ENCODE measurements at regions of chr3 and their contacts with region 1.

Region 1: GRCh38 chr3:47324278-47324865 is 41.6 kb downstream of the KLHL18 start:
- DNase-seq: peak; percentile 6 to 69 (median 52)
- ATAC-seq: peak; percentile 56
- H3K4me3 ChIP-seq: no peak overlapping the region
- H3K4me3 Mint-ChIP-seq: no peak overlapping the region
- H3K27ac ChIP-seq: no peak overlapping the region
- H3K27ac Mint-ChIP-seq: no peak overlapping the region
- H3K4me1 ChIP-seq: no peaks in the 10 kb centered on the region
- H3K4me1 Mint-ChIP-seq: no peaks in the 10 kb centered on the region
- H3K27me3 ChIP-seq: no peaks in the 10 kb centered on the region
- H3K27me3 Mint-ChIP-seq: no peaks in the 10 kb centered on the region
- CTCF ChIP-seq: peak; percentile 70

Region 2: DNA sequence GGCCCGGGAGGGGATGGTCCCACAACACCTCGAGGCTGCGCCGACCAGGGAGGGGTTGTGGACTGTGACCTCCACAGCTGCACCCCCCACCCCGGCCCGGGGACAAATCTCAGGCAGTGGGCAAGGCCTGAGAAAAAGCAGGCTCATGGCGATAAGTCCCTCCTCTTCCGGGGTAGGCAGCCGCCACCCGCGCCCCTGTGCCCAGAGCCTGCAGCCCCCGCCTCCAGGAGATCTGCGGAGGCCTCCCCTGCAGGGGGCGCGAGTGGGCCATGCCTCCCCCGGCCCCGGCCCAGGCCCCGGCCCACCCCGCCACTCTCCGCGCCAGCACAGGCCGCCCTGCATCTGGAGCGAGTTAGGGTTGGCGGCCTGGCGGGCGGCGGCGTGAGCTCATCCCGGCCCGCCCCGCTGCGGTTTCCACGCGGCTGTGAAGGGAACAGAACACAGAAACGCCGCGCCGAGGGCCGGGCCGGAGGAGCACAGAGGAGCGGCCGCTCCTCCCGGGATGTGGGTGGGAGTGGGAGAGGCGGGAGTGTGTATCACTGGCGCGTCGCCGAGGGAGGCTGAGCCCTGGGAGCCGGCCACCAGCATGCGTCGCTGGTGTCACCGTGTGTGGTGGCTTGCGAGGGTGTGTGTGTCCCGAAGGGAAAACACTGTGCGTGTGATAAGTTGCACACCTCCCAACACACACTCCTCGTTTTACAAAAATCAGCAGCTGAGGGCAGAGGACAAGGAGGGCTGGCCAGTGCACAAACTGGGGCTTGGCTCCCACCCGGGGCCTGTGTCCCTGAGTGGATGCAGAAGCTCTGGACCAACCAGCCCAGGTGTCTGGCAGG is 478.4 kb before region 1 on chr3:
- CTCF ChIA-PET with region 1: no interaction called
- POLR2A ChIA-PET with region 1: no interaction called
- intact Hi-C with region 1: loop called in 1 of 2 experiments (anchors 5 kb)
- DNase-seq: peak; percentile 55 to 86 (median 79)
- ATAC-seq: peak; percentile 95
- H3K4me3 ChIP-seq: peak overlapping the region; percentile 64 to 82
- H3K4me3 Mint-ChIP-seq: peak overlapping the region; percentile 85
- H3K27ac ChIP-seq: peak overlapping the region; percentile 32 to 36
- H3K27ac Mint-ChIP-seq: peak overlapping the region; percentile 55
- H3K4me1 ChIP-seq: peaks cover 10% of the 10 kb centered on the region
- H3K4me1 Mint-ChIP-seq: peaks cover 11% of the 10 kb centered on the region
- H3K27me3 ChIP-seq: no peaks in the 10 kb centered on the region
- H3K27me3 Mint-ChIP-seq: no peaks in the 10 kb centered on the region
- CTCF ChIP-seq: peak; percentile 68

Region 3: DNA sequence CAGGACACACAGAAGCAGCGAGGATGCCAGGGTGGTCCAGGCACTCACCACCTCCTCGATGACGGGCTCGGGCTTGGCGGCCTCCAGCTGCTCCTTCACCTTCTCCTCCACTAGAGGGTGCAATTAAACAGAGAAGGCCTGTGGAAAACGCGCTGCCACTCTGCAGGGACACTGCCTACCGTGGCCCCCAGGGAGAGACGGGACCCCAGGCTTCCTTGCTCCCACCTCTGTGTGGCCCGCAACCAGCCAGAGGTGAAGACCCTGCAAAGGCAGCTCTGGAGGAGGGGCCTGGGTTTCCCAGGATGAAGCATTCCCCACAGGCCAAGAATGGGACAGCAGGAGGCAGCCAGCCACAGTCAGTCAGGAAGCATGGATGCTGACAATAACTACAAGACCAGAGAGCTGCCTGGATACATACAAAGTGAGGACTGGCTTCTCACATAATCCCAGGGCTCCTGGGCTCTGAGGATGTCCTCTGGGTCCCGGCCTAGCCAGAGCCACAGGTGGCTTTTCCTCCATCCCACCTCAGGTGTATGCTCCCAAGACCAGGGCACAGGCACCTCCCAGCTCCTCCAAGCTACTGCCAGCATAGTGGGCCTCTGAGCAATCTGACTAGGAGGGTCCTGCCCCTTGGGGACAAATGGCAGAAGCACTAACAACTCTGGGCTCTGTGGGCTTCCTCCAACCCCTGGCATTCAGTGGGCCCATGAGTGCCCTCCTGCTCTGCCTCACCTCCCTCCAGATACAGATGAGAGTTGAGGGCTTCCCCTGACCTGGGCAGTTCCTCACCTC is 400.6 kb before region 1 on chr3:
- CTCF ChIA-PET with region 1: interaction called, 5 read pairs
- POLR2A ChIA-PET with region 1: no interaction called
- intact Hi-C with region 1: loop called in 1 of 2 experiments (anchors 5 kb)
- DNase-seq: peak in 7 of 9 experiments; percentile 16 to 61 (median 48)
- ATAC-seq: peak; percentile 63
- H3K4me3 ChIP-seq: no peak overlapping the region
- H3K4me3 Mint-ChIP-seq: no peak overlapping the region
- H3K27ac ChIP-seq: no peak overlapping the region
- H3K27ac Mint-ChIP-seq: peak overlapping the region; percentile 77
- H3K4me1 ChIP-seq: peaks cover 28% of the 10 kb centered on the region
- H3K4me1 Mint-ChIP-seq: peaks cover 29% of the 10 kb centered on the region
- H3K27me3 ChIP-seq: no peaks in the 10 kb centered on the region
- H3K27me3 Mint-ChIP-seq: no peaks in the 10 kb centered on the region
- CTCF ChIP-seq: peak; percentile 46

Region 4: DNA sequence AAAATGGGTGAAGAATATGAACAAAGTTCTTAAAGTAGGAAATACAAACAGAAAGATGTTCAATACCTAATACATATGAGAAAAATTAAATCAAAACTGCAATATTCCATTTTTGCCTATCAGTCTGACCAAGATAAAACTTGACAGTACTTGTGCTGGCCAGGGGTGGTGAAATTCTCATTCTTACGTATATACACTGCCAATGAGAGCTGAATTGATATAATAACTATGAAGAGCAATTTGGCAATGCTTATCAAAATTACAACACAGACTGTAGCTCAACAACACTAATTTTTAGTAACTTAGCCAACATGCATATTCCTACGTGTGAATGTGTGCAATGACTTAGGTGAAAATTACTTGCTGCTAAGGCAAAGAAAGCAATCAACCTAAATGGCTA is 250.7 kb before region 1 on chr3:
- CTCF ChIA-PET with region 1: no interaction called
- POLR2A ChIA-PET with region 1: no interaction called
- intact Hi-C with region 1: loop called in 1 of 2 experiments (anchors 10 kb)
- DNase-seq: no peak
- ATAC-seq: no peak
- H3K4me3 ChIP-seq: no peak overlapping the region
- H3K4me3 Mint-ChIP-seq: no peak overlapping the region
- H3K27ac ChIP-seq: no peak overlapping the region
- H3K27ac Mint-ChIP-seq: peak overlapping the region; percentile 12
- H3K4me1 ChIP-seq: no peaks in the 10 kb centered on the region
- H3K4me1 Mint-ChIP-seq: peaks cover 24% of the 10 kb centered on the region
- H3K27me3 ChIP-seq: no peaks in the 10 kb centered on the region
- H3K27me3 Mint-ChIP-seq: no peaks in the 10 kb centered on the region
- CTCF ChIP-seq: no peak

Region 5: DNA sequence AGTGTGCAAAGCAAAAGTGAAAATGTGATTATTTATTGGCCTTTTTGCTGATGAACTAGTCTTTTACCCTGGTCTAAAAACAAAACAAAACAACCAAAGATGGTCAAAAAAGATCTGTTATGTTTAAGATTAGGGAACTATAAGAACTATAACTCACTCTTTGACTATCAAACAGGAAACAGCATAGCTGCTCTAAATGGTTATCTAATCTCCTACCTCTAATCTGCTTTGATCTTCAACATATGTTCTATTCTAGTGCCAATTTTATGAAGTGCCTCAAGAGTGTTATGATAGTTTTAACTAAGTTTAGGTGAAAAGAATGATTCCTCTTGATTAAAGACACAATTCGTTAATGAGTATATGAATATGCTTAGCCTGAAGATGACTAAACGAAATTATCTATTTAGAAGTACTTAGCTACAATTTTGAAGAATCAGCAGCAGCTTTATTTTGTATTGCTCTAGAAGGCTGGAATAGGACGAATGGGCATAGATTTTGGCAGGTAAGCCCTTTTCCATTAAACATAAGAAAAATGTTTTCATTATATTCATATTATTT is 206.5 kb before region 1 on chr3:
- CTCF ChIA-PET with region 1: no interaction called
- POLR2A ChIA-PET with region 1: interaction called, 3 read pairs
- intact Hi-C with region 1: loop called in 1 of 2 experiments (anchors 5 kb)
- DNase-seq: no peak
- ATAC-seq: no peak
- H3K4me3 ChIP-seq: no peak overlapping the region
- H3K4me3 Mint-ChIP-seq: no peak overlapping the region
- H3K27ac ChIP-seq: no peak overlapping the region
- H3K27ac Mint-ChIP-seq: peak overlapping the region; percentile 13
- H3K4me1 ChIP-seq: peaks cover 13% of the 10 kb centered on the region
- H3K4me1 Mint-ChIP-seq: peaks cover 37% of the 10 kb centered on the region
- H3K27me3 ChIP-seq: no peaks in the 10 kb centered on the region
- H3K27me3 Mint-ChIP-seq: no peaks in the 10 kb centered on the region
- CTCF ChIP-seq: no peak

Region 6: GRCh38 chr3:47250309-47251060 is 73.9 kb before region 1 on chr3:
- CTCF ChIA-PET with region 1: interaction called, 4 read pairs
- POLR2A ChIA-PET with region 1: no interaction called
- intact Hi-C with region 1: loop called in 1 of 2 experiments (anchors 1 kb)
- DNase-seq: no peak
- ATAC-seq: no peak
- H3K4me3 ChIP-seq: no peak overlapping the region
- H3K4me3 Mint-ChIP-seq: no peak overlapping the region
- H3K27ac ChIP-seq: no peak overlapping the region
- H3K27ac Mint-ChIP-seq: no peak overlapping the region
- H3K4me1 ChIP-seq: no peaks in the 10 kb centered on the region
- H3K4me1 Mint-ChIP-seq: no peaks in the 10 kb centered on the region
- H3K27me3 ChIP-seq: no peaks in the 10 kb centered on the region
- H3K27me3 Mint-ChIP-seq: no peaks in the 10 kb centered on the region
- CTCF ChIP-seq: no peak

Region 7: DNA sequence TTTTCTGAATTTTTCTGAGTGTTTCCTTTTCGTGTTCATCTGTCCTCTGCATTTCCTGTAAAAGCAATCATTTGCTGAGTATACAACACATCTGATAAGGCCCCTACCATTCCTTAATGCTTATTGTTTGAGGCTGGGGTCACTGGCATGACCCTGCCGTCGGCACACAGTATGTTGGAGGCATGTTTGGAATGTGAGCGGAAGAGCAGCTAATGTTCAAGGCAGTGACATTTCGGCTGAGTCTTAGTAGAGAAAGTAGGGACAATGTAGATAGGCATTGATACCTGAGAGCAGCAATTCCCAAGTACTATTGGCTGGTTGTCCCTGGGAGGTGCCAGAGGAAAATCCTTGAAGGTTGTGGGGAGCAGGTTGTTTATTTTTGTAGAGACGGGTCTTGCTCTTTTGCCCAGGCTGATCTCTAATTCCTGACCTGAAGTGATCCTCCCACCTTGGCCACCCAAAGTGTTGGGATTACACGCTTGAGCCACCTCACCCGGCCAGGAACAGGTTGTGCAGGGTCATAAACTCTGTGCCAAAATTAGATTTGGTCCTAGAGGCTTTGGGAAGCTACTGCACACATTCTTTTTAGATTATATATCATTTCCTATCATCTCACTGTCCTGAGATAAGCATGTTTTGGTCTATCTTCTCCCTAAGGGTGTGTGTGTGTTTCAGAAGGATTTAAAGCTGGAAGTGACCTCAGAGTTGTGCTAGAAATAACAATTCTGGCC is 69.9 kb after region 1 on chr3:
- CTCF ChIA-PET with region 1: no interaction called
- POLR2A ChIA-PET with region 1: no interaction called
- intact Hi-C with region 1: no loop called
- DNase-seq: no peak
- ATAC-seq: no peak
- H3K4me3 ChIP-seq: no peak overlapping the region
- H3K4me3 Mint-ChIP-seq: no peak overlapping the region
- H3K27ac ChIP-seq: no peak overlapping the region
- H3K27ac Mint-ChIP-seq: peak overlapping the region; percentile 69
- H3K4me1 ChIP-seq: peaks cover 7% of the 10 kb centered on the region
- H3K4me1 Mint-ChIP-seq: peaks cover 36% of the 10 kb centered on the region
- H3K27me3 ChIP-seq: no peaks in the 10 kb centered on the region
- H3K27me3 Mint-ChIP-seq: no peaks in the 10 kb centered on the region
- CTCF ChIP-seq: no peak

Region 8: DNA sequence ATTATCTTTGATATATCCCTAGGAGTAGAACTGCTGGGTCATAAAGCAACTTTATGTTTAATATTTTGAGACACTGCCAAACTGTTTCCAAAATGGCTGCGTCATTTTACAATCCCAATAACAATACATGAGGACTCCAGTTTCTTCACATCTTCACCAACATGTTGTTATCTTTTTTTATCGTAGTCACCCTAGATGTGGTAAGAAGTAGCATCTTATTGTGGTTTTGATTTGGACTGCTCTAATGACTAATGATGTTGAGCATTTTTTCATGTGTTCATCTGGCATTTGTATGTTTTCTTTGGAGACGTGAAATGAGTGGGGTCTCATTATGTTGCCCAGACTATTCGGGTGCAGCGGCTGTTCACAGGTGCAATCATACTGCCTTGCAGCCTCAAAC is 608.0 kb after region 1 on chr3:
- CTCF ChIA-PET with region 1: no interaction called
- POLR2A ChIA-PET with region 1: no interaction called
- intact Hi-C with region 1: no loop called
- DNase-seq: no peak
- ATAC-seq: no peak
- H3K4me3 ChIP-seq: no peak overlapping the region
- H3K4me3 Mint-ChIP-seq: no peak overlapping the region
- H3K27ac ChIP-seq: no peak overlapping the region
- H3K27ac Mint-ChIP-seq: no peak overlapping the region
- H3K4me1 ChIP-seq: no peaks in the 10 kb centered on the region
- H3K4me1 Mint-ChIP-seq: no peaks in the 10 kb centered on the region
- H3K27me3 ChIP-seq: no peaks in the 10 kb centered on the region
- H3K27me3 Mint-ChIP-seq: no peaks in the 10 kb centered on the region
- CTCF ChIP-seq: no peak

Measured in CD8-positive, alpha-beta T cell (primary cell).